ENCODE measurements at regions of chr9 and their contacts with region 1.

Region 1: DNA sequence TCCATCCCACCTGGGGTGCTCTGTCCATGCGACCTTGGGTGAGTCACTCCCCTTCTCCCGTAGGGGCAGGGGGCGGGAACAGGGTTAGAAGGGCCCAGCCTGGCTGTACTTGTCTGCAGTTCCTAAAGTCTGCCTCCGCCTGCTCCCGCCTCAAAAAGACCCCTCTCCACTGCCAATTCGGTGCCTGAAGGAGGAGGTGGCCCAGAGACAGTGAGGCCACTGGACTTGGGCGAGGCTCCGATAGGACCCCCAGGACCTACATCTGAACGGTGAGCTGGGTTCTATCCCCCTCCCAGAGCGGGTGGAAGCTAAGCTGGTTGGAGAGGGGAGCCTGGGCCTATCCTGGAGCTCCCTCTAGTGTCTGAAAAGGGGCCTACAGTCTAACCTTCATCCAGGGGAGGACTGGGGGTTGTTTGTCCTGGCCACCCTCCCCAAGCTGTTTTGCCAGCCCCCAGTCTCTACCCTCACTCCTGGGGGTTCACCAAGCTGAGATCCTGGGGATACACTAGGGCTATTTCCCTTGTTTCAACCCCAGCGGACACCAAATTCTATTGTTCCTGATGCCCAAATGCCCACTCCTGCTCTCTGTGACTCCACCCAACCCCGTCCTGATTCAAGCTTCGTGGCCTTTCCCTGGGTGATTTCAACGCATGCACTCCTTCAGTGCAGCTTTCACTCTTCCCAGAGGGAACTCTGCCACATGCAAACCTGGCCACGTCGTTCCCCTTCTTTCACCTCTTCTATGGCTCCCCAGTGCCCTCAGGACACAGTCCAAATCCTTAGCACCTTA is 6.1 kb upstream of the CRB2 start:
- DNase-seq: peak; percentile 33 to 52 (median 50)
- H3K4me3 ChIP-seq: no peak overlapping the region
- H3K27ac ChIP-seq: no peak overlapping the region
- H3K4me1 ChIP-seq: peaks cover 2% of the 10 kb centered on the region
- H3K27me3 ChIP-seq: no peaks in the 10 kb centered on the region
- CTCF ChIP-seq: peak; percentile 52 to 81 (median 72)
- EP300 ChIP-seq: no peak
- POLR2A ChIP-seq: no peak

Region 2: DNA sequence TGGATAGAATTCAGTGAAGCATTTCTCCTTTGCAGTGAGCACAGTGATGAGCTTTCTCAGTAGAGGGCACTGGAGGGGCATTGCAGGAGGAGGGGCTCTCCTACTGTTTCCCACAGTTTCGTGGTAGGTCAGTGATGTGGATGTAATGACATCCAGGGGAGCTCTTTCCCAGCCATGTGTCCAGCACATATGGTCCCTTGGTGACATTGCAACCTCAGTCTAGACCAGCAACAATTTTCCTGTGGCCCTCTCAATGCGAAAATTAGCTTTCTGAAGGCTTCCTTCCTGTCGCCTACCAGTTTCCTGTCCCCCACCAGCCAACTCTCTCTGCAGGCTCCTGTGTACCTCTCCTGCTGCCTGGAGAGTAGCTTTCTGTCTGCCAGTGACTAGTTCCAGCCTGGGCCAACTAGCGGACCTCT is 514.6 kb before region 1 on chr9:
- intact Hi-C with region 1: loop called in 1 of 4 experiments (anchors 10 kb)
- DNase-seq: no peak
- H3K4me3 ChIP-seq: no peak overlapping the region
- H3K27ac ChIP-seq: no peak overlapping the region
- H3K4me1 ChIP-seq: no peaks in the 10 kb centered on the region
- H3K27me3 ChIP-seq: no peaks in the 10 kb centered on the region
- CTCF ChIP-seq: no peak
- EP300 ChIP-seq: no peak
- POLR2A ChIP-seq: no peak

Region 3: DNA sequence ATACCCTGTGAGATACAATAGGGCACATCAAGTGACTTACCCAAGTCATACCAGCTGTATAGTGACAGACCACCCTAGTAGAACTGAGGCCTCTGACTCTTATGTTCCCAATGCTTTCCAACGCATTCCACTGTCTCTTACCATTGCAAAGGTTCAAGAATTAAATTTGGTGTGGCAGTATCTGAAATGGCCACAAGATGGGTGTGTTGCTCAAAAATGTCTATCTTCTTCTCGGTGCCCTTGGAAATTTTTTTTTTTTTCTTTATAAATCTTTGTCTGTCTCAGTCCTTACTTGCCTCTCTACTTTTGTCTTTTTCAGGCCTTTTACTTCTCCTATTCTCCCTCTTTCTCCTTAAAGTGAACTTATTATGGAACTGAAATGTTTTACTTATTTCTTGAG is 268.1 kb before region 1 on chr9:
- intact Hi-C with region 1: loop called in 2 of 4 experiments (anchors 5 to 10 kb)
- DNase-seq: no peak
- H3K4me3 ChIP-seq: no peak overlapping the region
- H3K27ac ChIP-seq: no peak overlapping the region
- H3K4me1 ChIP-seq: no peaks in the 10 kb centered on the region
- H3K27me3 ChIP-seq: no peaks in the 10 kb centered on the region
- CTCF ChIP-seq: peak in 1 of 3 donors; percentile 25
- EP300 ChIP-seq: no peak
- POLR2A ChIP-seq: no peak

Region 4: GRCh38 chr9:123763910-123764588 is 414.2 kb after region 1 on chr9:
- intact Hi-C with region 1: no loop called
- DNase-seq: no peak
- H3K4me3 ChIP-seq: no peak overlapping the region
- H3K27ac ChIP-seq: no peak overlapping the region
- H3K4me1 ChIP-seq: peaks cover 5% of the 10 kb centered on the region
- H3K27me3 ChIP-seq: no peaks in the 10 kb centered on the region
- CTCF ChIP-seq: no peak
- EP300 ChIP-seq: no peak
- POLR2A ChIP-seq: no peak